Mammary epithelial cell (primary cell): ENCODE measurements at regions of chr10 and their contacts with region 1.

Region 1: GRCh38 chr10:76729816-76730487 is 907.7 kb downstream of the KCNMA1 start:
- DNase-seq: no peak
- H3K4me3 ChIP-seq: no peak overlapping the region
- H3K27ac ChIP-seq: no peak overlapping the region
- H3K4me1 ChIP-seq: no peaks in the 10 kb centered on the region
- H3K27me3 ChIP-seq: peaks cover 4% of the 10 kb centered on the region
- CTCF ChIP-seq: no peak

Region 2: GRCh38 chr10:76675951-76676587 is 53.9 kb before region 1 on chr10:
- CTCF ChIA-PET with region 1: no interaction called
- dilution Hi-C with region 1: loop called (anchors 5 kb)
- in situ Hi-C with region 1: no loop called
- intact Hi-C with region 1: no loop called
- DNase-seq: peak; percentile 4
- H3K4me3 ChIP-seq: no peak overlapping the region
- H3K27ac ChIP-seq: no peak overlapping the region
- H3K4me1 ChIP-seq: no peaks in the 10 kb centered on the region
- H3K27me3 ChIP-seq: no peaks in the 10 kb centered on the region
- CTCF ChIP-seq: peak in 1 of 2 donors; percentile 26

Region 3: GRCh38 chr10:76786504-76787072 is 56.6 kb after region 1 on chr10:
- CTCF ChIA-PET with region 1: no interaction called
- dilution Hi-C with region 1: no loop called
- in situ Hi-C with region 1: no loop called
- intact Hi-C with region 1: no loop called
- DNase-seq: no peak
- H3K4me3 ChIP-seq: no peak overlapping the region
- H3K27ac ChIP-seq: no peak overlapping the region
- H3K4me1 ChIP-seq: no peaks in the 10 kb centered on the region
- H3K27me3 ChIP-seq: no peaks in the 10 kb centered on the region
- CTCF ChIP-seq: no peak